Spleen (tissue), 13 donors: ENCODE measurements at regions of chr9 and their contacts with region 1.

Region 1: DNA sequence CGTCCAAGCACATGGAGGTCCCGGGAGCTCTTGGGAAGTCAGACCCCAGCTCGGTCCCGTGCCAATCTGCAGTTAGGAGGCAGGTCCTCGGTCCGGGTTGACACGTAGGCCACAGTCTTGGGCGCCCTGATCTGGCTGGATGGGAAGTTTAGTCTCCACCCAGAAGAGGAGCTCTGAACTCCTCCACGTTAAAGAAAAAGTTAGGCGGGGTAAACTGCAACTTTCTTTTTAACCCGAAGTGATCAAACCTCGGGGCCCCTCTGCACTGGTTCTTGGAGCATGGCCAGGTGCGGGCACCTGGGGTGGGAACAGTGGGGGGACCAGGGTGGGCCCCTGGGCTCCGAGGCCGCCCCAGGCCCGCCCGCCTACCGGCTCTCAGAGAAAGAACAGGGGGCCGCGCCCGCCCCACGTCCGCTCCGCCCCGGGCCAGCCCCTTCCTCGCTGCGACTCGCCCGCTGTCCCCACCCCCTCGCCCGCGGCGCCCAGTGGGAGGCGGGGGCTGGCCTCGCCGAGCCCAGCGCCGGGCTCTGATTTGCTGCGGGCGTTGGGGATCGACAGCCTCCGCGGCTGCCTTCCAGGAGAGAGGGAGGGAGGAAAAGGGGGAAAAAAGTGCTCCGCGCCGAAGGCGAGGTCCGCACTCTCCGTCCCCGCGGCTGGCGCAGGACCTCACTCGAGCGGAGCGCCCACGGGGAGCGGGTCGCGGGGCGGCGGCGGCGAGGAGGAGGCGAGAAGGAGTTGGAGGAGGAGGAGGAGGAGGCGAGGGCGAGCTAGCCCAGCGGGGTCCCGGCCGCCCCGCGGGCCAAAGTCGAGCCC is at the start of gene COL5A1:
- DNase-seq: peak; percentile 85
- H3K4me3 ChIP-seq: peak within 1 kb of the TSS; percentile 37 to 75 (median 57)
- H3K27ac ChIP-seq: peak within 1 kb of the TSS in 7 of 8 donors; percentile 67 to 85 (median 79)
- H3K4me1 ChIP-seq: peaks cover 0 to 64% (median 32%) of the 10 kb centered on the region in 6 donors
- H3K27me3 ChIP-seq: peaks cover 0 to 53% (median 18%) of the 10 kb centered on the region in 7 donors
- CTCF ChIP-seq: peak in 7 of 11 experiments; percentile 15 to 48 (median 34)
- POLR2A ChIP-seq: peak in 1 of 3 donors; percentile 14
- total RNA-seq, gene COL5A1: 14.6 to 50.6 (median 28.9) TPM

Region 2: GRCh38 chr9:134455934-134456739 is 185.2 kb before region 1 on chr9:
- intact Hi-C with region 1: loop called (anchors 10 kb)
- DNase-seq: peak; percentile 96
- H3K4me3 ChIP-seq: peak overlapping the region; percentile 27 to 70 (median 40)
- H3K27ac ChIP-seq: peak overlapping the region; percentile 83 to 95 (median 90)
- H3K4me1 ChIP-seq: peaks cover 11 to 51% (median 30%) of the 10 kb centered on the region in 6 donors
- H3K27me3 ChIP-seq: no peaks in the 10 kb centered on the region
- CTCF ChIP-seq: peak in 8 of 11 experiments; percentile 6 to 53 (median 30)
- POLR2A ChIP-seq: no peak

Region 3: DNA sequence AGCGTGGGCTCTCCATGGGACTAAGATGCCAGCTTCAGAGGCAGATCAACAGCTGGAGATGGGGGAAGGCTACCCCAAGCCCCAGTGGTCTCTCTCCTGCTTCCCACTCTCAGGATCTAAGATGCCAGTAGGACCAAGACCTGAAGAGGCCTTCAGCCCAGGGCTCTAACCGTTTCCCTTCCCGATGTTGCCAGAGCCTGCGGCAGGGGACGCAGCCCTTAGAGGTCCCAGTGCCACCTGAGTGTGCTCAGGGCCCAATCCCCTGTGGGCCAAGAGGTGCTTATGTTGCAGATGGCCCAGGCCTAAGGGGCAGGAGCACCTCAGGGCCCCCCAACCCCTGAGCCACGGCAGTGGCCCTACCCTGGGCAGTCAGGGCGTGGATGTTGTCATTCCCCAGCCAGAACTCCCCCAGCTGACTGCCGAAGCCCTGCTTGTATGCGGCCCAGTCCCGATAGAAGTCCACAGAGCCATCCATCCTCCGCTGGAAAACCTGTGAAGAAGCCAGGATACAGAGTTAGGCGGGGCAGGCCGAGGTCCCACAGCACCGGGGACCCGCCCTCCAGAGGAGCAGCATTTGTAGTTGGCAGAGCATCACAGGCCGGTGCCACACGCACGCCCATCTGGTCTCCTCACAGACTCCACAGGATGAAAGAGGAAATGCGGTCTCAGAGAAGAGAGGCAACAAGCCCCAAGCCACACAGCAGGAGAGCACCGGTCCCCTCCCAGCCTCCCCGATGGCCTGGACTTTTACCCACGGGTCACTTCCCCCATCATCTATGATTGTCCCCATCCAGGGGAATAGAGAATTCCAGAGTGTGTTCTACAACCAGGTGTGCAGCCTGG is 271.0 kb after region 1 on chr9:
- intact Hi-C with region 1: no loop called
- DNase-seq: no peak
- H3K4me3 ChIP-seq: no peak overlapping the region
- H3K27ac ChIP-seq: peak overlapping the region in 1 of 8 donors; percentile 18
- H3K4me1 ChIP-seq: peaks cover 0 to 23% (median 2%) of the 10 kb centered on the region in 6 donors
- H3K27me3 ChIP-seq: peaks cover 0 to 52% (median 0%) of the 10 kb centered on the region in 7 donors
- CTCF ChIP-seq: no peak
- POLR2A ChIP-seq: no peak